Ascending aorta (tissue), 2 donors: ENCODE measurements at regions of chr16 and their contacts with region 1.

Region 1: GRCh38 chr16:16857603-16858313 is 478.8 kb downstream of the NPIPA7 start:
- DNase-seq: no peak
- H3K4me3 ChIP-seq: no peak overlapping the region
- H3K27ac ChIP-seq: no peak overlapping the region
- H3K4me1 ChIP-seq: no peaks in the 10 kb centered on the region
- H3K27me3 ChIP-seq: no peaks in the 10 kb centered on the region
- CTCF ChIP-seq: no peak

Region 2: DNA sequence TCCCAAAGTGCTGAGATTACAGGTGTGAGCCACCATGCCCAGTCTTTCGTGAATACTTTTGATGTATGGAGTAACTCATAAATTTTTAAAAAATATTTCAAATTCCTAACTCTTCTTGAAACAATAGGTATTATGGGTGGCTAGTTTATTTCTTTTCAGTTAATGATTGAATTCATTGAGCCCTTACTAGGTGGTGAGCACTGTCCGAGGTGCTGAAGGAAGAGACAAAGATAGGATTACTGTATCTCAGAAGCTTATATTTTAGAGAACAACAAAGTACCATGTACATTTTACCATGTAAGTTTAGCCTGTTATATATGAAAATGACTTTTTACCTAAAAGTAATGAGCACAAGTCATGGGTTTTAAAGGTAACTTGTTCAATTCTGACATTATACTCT is 60.5 kb before region 1 on chr16:
- intact Hi-C with region 1: loop called (anchors 10 kb)
- DNase-seq: no peak
- H3K4me3 ChIP-seq: no peak overlapping the region
- H3K27ac ChIP-seq: no peak overlapping the region
- H3K4me1 ChIP-seq: no peaks in the 10 kb centered on the region
- H3K27me3 ChIP-seq: no peaks in the 10 kb centered on the region
- CTCF ChIP-seq: no peak

Region 3: GRCh38 chr16:16821261-16821660 is 36.5 kb before region 1 on chr16:
- intact Hi-C with region 1: no loop called
- DNase-seq: no peak
- H3K4me3 ChIP-seq: no peak overlapping the region
- H3K27ac ChIP-seq: no peak overlapping the region
- H3K4me1 ChIP-seq: no peaks in the 10 kb centered on the region
- H3K27me3 ChIP-seq: no peaks in the 10 kb centered on the region
- CTCF ChIP-seq: no peak

Region 4: DNA sequence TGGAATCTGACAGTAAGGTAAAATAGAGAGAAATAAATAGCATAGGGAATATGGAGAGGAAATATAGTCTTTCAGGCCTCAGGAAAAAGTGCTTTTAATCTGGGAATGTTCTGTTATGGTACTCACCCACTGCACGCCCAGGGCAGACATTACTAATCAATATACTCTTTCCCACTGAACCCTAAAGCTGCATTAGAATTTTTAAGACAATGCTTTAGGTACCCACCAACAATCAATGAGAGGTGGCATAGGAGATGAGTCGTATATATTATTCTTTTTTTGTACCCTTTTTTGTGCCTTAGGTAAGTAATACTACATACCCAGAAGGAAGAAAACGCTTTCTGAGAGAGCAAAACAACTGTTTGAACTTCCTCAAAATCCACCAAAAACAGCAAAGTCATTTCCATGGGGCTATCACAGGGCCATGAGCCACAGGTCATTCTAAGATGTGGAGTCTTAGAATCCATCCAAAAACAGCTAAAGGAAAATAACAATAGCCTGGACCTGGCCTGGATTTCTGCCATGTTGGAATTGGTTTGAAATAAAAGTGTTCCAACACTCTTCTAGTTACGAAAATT is 70.9 kb after region 1 on chr16:
- intact Hi-C with region 1: no loop called
- DNase-seq: no peak
- H3K4me3 ChIP-seq: no peak overlapping the region
- H3K27ac ChIP-seq: no peak overlapping the region
- H3K4me1 ChIP-seq: no peaks in the 10 kb centered on the region
- H3K27me3 ChIP-seq: no peaks in the 10 kb centered on the region
- CTCF ChIP-seq: no peak